Colonic mucosa (tissue), 4 donors: ENCODE measurements at regions of chr10 and their contacts with region 1.

Region 1: GRCh38 chr10:70540089-70540788 is 61.7 kb downstream of the PALD1 start:
- DNase-seq: no peak
- H3K4me3 ChIP-seq: no peak overlapping the region
- H3K27ac ChIP-seq: no peak overlapping the region
- H3K4me1 ChIP-seq: no peaks in the 10 kb centered on the region
- H3K27me3 ChIP-seq: no peaks in the 10 kb centered on the region
- CTCF ChIP-seq: peak; percentile 47

Region 2: DNA sequence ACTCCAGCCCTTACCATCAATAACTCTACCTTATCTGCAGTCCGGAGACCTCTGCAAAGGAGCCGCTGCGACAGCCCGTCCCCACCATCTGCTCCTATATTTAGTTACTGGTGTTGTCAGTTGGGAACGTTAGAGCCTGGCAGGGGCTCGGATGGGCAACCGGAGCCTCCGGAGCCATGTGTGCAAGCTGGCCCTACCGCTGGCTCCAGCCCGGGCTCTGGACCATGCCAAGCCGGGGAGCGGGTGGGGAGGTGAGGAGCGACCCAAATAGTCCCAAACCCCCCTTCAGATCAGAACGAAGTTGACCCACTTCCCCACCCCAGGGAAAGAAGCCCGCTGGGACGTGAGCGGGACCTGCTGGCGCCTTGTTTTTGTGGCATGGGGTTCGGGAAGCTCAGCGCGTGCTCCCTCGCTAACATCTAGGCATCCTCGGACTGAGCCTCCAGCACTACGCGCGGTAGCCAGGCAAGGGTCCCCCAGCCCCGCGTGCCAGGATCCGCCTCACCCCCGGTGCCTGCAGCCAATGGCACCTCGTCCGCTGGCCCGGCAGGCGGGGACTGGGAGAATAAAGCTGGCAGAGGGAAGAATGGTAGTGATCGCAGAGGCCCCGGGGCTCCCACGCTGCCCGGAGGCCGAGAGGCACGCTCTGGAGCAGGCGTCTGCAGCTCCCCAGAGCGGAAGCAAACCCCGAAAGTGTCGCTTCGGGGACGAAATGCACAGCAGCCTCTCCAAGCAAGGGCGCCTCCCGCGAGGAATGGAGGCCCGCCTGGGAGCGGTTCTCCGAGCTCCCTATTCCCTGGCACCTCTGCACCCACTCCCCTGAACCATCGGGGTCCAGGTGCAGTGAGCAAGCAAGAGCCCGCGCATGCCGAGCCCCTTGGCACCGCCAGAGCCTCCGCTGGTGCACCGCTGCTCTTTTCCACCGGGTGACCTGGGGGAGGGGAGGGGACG is 158.5 kb before region 1 on chr10:
- intact Hi-C with region 1: loop called (anchors 5 kb)
- DNase-seq: peak; percentile 52
- H3K4me3 ChIP-seq: peak overlapping the region; percentile 78
- H3K27ac ChIP-seq: peak overlapping the region; percentile 14
- H3K4me1 ChIP-seq: no peaks in the 10 kb centered on the region
- H3K27me3 ChIP-seq: no peaks in the 10 kb centered on the region
- CTCF ChIP-seq: no peak

Region 3: GRCh38 chr10:70461215-70461986 is 78.8 kb before region 1 on chr10:
- intact Hi-C with region 1: loop called (anchors 2 kb)
- DNase-seq: peak; percentile 52
- H3K4me3 ChIP-seq: no peak overlapping the region
- H3K27ac ChIP-seq: no peak overlapping the region
- H3K4me1 ChIP-seq: peaks cover 4% of the 10 kb centered on the region
- H3K27me3 ChIP-seq: peaks cover 15% of the 10 kb centered on the region
- CTCF ChIP-seq: peak; percentile 70